AG04449 (cell line): ENCODE measurements at regions of chr6 and their contacts with region 1.

Region 1: GRCh38 chr6:142112451-142113061 is 20.2 kb upstream of the GJE1 start:
- DNase-seq: peak; percentile 16
- H3K4me3 ChIP-seq: no peak overlapping the region
- CTCF ChIP-seq: peak; percentile 66

Region 2: DNA sequence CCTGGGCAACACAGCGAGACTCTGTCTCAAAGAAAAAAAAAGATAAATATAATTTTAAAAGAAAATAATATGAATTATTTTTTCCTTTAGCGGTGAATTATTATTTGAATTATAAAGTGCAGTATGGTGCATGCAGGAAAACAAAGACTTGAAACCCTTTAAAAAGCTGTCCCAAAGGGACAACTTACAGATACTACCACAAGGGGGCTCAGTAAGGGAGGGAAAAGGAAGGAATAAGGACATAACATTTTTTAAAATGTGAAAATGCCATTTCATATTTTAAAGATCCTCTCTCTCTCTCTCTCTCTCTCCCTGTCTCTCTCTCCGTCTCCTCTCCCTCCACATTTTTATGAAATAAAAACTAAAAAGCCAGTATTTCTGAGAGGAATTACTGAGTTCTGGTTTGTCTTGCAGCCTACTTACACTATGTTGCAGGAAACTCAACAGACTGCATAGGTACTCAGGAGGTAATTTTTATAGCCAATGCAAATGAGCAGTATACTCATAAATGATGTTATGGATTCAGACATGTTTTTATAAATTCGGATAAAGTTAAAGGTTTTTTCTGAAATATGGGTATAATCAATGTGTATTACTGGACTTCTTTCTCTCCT is 434.9 kb before region 1 on chr6:
- CTCF ChIA-PET with region 1: interaction called, 64 read pairs
- POLR2A ChIA-PET with region 1: no interaction called
- DNase-seq: no peak
- H3K4me3 ChIP-seq: no peak overlapping the region
- CTCF ChIP-seq: peak; percentile 50

Region 3: DNA sequence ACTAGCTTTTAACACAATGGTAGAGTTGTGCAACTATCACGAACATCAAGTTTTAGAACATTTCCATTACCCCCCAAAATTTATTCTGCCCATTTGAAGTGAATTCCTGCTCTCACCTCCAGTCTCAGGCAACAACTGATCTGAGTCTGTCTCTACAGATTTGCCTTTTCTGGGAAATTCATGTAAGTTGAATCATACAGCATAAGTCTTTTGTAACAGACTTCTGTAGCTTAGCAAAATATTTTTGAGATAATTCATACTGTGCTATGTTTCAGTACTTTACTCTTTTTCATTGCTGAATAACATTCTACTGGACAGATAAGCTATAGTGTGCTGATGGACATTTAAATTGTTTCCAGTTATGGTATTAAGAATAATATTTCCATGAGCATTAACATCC is 427.1 kb before region 1 on chr6:
- CTCF ChIA-PET with region 1: interaction called, 21 read pairs
- POLR2A ChIA-PET with region 1: no interaction called
- DNase-seq: no peak
- H3K4me3 ChIP-seq: no peak overlapping the region
- CTCF ChIP-seq: no peak